HepG2 (cell line): ENCODE measurements at regions of chr22 and their contacts with region 1.

Region 1: DNA sequence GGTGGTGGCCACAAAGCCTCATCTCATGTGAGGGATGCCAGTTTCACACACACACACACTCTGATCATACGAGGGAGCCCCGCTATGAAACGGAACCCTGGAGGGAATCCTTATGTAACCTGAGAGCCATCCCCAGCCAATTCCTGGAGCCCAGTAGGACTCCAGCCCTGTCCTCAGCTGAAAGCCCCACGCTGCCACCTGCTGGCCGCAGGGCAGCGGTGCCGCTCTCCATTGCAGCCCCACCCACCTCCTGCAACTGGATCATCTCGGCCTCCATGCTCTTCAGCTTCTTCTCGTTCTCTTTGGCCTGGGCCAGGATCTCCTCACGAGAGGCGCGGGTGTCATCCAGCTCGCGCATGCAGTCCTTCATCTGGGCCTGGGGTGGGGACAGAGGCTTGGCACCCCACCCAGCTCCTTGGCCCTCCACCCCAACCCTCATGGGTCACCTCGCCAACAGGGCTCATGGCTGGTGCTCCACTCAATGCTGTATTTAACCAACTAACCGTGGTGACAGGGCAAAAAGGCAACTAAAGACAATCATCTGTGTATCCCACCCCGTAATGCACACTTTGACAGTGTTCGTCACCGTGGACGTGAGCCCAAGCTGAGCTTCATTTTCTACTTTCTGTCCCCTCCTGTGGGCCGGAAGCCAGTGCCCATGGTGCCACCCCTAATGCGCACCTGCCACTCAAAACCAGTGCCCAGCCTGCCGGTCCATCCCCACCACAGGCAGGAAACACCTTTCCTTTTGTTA is 33.7 kb downstream of the APOL1 start:
- DNase-seq: peak; percentile 52
- ATAC-seq: peak; percentile 88
- H3K4me3 ChIP-seq: no peak overlapping the region
- H3K27ac ChIP-seq: no peak overlapping the region
- H3K4me1 ChIP-seq: no peaks in the 10 kb centered on the region
- H3K27me3 ChIP-seq: no peaks in the 10 kb centered on the region
- CTCF ChIP-seq: peak; percentile 96
- EP300 ChIP-seq: no peak
- POLR2A ChIP-seq: peak in 1 of 2 experiments; percentile 42; a peak in 1 of 4 replicates
- RAD21 ChIP-seq: peak; percentile 91

Region 2: GRCh38 chr22:35479985-35480550 is 806.6 kb before region 1 on chr22:
- CTCF ChIA-PET with region 1: no interaction called
- POLR2A ChIA-PET with region 1: no interaction called
- in situ Hi-C with region 1: no loop called
- intact Hi-C with region 1: no loop called
- DNase-seq: no peak
- ATAC-seq: no peak
- H3K4me3 ChIP-seq: no peak overlapping the region
- H3K27ac ChIP-seq: no peak overlapping the region
- H3K4me1 ChIP-seq: no peaks in the 10 kb centered on the region
- H3K27me3 ChIP-seq: peaks cover 4 to 53% of the 10 kb centered on the region in 2 experiments; a peak in 4 of 5 replicates
- CTCF ChIP-seq: no peak
- EP300 ChIP-seq: no peak
- POLR2A ChIP-seq: no peak
- RAD21 ChIP-seq: no peak

Region 3: DNA sequence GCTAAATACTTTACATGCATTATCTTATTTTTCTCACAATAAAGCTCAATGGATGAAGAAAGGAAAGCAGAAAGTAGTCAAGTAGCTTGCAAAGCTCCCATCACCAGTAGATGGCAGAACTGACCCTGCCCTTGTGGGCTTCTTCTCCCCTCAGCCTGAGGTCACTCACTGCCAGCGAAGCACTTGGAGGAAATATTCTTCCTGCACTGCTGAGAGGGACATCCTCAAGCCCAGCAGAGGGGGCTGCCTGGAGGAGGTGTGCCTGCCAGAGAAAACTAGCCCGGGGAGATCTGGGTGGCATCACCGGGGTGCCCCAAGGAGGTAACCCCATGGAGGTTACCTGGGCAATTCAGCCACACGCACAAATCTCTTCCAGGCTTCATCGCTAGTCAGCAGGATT is 91.7 kb before region 1 on chr22:
- CTCF ChIA-PET with region 1: interaction called, 14 read pairs
- POLR2A ChIA-PET with region 1: no interaction called
- in situ Hi-C with region 1: loop called (anchors 5 kb)
- intact Hi-C with region 1: loop called (anchors 2 kb)
- DNase-seq: peak; percentile 40
- ATAC-seq: peak; percentile 78
- H3K4me3 ChIP-seq: no peak overlapping the region
- H3K27ac ChIP-seq: no peak overlapping the region
- H3K4me1 ChIP-seq: peaks cover 30% of the 10 kb centered on the region
- H3K27me3 ChIP-seq: no peaks in the 10 kb centered on the region
- CTCF ChIP-seq: peak; percentile 85
- EP300 ChIP-seq: no peak
- POLR2A ChIP-seq: no peak
- RAD21 ChIP-seq: peak; percentile 70

Region 4: GRCh38 chr22:36201630-36202319 is 84.9 kb before region 1 on chr22 and contains the start of gene APOL4:
- CTCF ChIA-PET with region 1: no interaction called
- POLR2A ChIA-PET with region 1: no interaction called
- in situ Hi-C with region 1: loop called (anchors 5 kb)
- intact Hi-C with region 1: loop called (anchors 2 kb)
- DNase-seq: no peak
- ATAC-seq: no peak
- H3K4me3 ChIP-seq: peak within 1 kb of the TSS in 1 of 3 experiments; percentile 56; a peak in 1 of 6 replicates
- H3K27ac ChIP-seq: no peak within 1 kb of the TSS
- H3K4me1 ChIP-seq: peaks cover 65% of the 10 kb centered on the region
- H3K27me3 ChIP-seq: no peaks in the 10 kb centered on the region; a peak in 1 of 5 replicates
- CTCF ChIP-seq: no peak
- EP300 ChIP-seq: no peak
- POLR2A ChIP-seq: no peak
- RAD21 ChIP-seq: no peak
- total RNA-seq, gene APOL4: 0.45 and 0.77 TPM in 2 replicates